Sciatic nerve (tissue), 2 donors: ENCODE measurements at regions of chr17 and their contacts with region 1.

Region 1: GRCh38 chr17:74203439-74204240 is at the start of gene RPL38:
- DNase-seq: peak; percentile 98
- ATAC-seq: peak; percentile 91
- total RNA-seq, gene RPL38: 796 TPM

Region 2: DNA sequence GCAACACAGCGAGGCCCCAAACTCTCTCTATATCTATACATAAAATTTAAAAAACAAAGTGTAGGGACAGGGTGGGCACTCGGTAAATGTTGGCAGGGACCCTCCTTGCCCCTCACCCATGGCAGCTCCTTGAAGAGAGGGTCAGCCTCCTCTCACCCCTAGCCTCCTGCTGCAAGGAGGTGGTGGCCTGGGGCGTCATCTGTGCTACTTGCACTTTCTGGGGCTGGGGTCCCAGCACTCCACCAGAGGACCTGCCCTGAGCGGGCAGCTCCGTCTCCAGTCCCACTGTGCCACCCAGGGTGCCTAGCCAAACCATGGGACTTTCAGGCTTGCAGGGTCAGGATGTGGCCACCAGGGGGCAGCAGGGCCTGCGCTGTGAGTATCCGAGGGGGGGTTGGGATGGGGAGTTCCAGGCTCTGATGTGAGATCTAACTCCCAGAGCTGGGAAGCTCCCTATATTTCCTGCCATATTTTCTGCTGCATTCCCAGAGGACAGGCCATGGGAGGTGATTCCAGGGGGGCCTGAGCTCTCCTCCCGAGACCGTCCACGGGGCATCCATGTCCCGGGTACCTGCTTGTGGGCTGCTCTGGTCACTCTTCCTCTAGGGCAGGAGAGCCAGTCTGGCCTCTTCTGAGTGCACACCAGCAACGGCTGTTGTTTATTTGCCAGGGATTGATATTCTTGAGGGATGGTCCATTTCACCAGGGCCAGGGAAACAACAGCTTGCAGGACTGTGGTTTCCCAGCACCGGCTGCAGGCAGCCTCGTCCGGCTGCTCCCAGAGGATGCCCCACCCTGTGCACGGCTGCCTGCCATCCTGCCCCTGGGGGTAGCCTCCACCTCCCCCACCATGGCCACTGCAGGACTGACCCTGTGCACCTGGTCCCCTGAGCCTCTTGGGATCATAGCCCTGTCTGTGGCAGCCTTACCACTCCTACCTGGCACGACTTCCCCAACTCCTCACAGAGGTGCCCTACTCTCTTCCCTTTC is 164.7 kb after region 1 on chr17:
- intact Hi-C with region 1: loop called (anchors 10 kb)
- DNase-seq: peak; percentile 85
- ATAC-seq: peak; percentile 83